Posterior cingulate gyrus (tissue), 11 donors: ENCODE measurements at regions of chr19 and their contacts with region 1.

Region 1: GRCh38 chr19:662962-663681 is at the start of gene RNF126:
- DNase-seq: peak; percentile 73 to 97 (median 84)

Region 2: DNA sequence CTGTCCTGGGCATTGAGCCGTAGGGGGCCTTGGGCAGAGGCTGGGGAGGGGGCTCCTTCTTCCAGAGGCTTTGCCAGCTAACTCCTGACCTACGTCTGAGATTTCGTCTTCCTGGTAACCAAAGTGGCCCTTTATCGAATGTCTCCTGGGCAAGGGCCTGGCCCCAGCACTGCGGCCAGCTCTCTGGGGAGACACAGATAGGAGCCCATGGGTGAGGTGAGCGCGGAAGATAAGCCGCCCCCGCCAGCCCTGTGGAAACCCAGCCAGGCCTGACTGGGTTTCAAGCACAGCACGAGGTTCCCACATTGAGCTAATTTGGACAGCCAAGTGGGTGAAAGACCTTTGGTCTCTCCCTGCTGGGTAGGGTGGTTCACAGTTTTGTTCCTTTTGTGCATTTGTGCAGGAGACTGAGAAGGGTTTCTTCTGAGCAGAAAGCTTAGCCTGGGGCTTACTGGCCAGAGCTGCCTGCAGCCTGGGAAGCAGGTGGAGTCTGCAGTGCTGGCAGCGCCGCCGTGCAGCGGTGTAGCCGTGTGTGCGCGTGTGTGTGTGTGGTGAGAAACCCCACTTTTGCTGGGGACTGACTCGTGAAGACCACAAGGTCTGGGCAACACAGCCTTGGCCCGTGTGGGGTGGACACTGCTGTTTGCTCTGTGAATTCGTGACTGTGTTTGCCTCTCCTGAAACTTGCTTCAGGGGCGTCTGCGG is 88.3 kb before region 1 on chr19:
- intact Hi-C with region 1: no loop called
- DNase-seq: peak in 4 of 10 donors; percentile 50 to 93 (median 72)

Region 3: GRCh38 chr19:732148-733069 is 69.3 kb after region 1 on chr19:
- intact Hi-C with region 1: loop called (anchors 1 kb)
- DNase-seq: no peak

Region 4: DNA sequence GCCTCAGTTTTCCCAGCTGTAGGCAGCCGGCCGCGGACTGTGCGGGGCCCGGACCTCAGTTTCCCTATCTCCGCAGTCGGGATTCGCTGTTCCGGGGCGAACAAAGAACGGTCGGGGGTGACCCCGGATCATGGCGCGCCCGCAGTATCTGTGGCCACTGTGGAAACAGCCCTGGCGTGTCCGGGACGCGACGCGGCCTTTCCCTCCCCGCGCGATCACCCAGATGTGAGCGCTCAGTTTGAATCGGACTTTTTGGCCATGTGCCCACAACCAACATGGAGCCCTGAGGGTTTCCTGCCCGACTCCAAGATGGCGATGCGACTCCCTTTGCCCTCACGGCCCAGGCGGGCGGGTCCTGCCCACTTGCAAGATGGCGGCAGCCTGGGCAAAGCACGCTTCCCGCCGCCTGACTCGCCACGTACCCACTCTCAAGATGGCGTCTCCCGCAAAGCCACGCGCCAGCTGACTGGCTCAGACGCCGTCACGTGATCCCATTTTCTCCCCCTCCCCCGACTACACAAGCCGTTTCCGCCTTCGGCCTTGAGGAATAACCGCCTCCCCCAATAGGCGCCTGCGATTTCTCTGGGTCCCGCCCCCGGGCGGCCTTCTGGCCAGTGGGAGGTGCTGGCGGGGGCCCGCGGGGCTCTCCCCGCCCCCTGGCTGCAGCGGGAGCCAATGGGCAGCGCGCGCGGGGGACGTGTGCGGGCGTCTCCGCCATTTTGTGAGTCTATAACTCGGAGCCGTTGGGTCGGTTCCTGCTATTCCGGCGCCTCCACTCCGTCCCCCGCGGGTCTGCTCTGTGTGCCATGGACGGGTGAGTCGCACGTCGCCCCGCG is 133.8 kb after region 1 on chr19 and contains the start of gene PTBP1:
- intact Hi-C with region 1: loop called (anchors 10 kb)
- DNase-seq: peak; percentile 99 to 100 (median 100)

Region 5: GRCh38 chr19:925526-926322 is 262.6 kb after region 1 on chr19 and contains the start of gene ARID3A:
- intact Hi-C with region 1: loop called (anchors 10 kb)
- DNase-seq: peak; percentile 63 to 97 (median 76)